ENCODE measurements at regions of chr1 and their contacts with region 1.

Region 1: DNA sequence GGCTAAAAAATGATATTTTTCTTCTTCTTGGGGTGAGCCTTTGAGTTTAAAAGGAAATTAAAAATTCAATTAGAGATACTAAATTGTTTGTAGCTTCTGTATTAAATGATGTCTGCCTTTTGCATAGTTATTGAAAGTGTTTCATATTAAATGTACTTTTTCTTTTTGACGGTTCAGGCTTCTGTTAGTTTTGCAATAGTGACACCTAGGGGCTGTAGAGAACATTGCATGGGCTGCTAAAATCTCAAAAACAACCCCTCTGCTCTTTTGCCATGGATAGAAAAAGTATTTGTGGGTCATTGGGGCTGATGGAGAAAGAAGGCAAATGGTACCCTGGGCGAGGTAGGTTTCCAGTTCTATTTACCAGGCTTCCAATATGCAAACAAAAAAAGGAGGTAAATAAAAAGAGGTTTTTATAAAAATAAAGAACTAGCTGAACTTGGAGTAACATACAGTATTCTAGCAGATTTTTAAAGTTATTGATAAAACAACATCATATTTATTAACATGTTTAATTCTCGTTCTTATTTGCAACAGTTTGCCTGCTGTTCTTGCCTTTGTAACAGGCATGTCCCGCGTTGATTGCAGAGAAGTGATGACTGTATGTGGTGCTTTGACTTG is 115.4 kb upstream of the HOOK1 start:
- DNase-seq: no peak
- H3K4me3 ChIP-seq: no peak overlapping the region
- H3K27ac ChIP-seq: peak overlapping the region in 3 of 4 donors; percentile 24 to 56 (median 51)
- H3K4me1 ChIP-seq: peaks cover 0 to 64% (median 44%) of the 10 kb centered on the region in 4 donors
- H3K27me3 ChIP-seq: no peaks in the 10 kb centered on the region
- CTCF ChIP-seq: peak; percentile 84 to 96 (median 96)
- EP300 ChIP-seq: no peak
- POLR2A ChIP-seq: no peak

Region 2: DNA sequence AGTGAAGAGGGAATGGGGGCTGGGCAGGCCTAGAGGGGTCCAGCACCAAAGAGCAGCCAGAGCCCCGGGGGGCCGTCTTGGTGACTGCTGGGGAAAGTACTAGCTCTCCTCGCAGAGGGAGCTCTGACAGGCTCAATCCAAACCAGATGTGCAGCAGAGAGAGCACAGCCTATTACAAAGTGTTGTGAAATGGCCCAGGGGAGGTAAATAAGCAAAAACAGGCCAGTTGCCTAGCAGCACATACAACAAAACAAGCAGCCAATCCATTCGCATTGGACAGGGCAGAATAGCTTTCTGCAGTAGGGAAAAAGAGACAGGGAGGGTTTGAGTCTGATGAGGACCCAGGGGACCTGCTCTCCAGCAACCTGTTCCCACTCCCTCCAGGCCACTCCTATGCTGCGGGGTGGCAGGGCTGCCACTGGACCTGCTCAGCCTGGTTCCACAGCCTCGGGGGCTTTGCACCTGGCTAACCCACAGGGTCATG is 642.1 kb before region 1 on chr1:
- intact Hi-C with region 1: loop called (anchors 5 kb)
- DNase-seq: peak; percentile 92
- H3K4me3 ChIP-seq: no peak overlapping the region
- H3K27ac ChIP-seq: peak overlapping the region; percentile 43 to 68 (median 58)
- H3K4me1 ChIP-seq: peaks cover 0 to 51% (median 29%) of the 10 kb centered on the region in 4 donors
- H3K27me3 ChIP-seq: no peaks in the 10 kb centered on the region
- CTCF ChIP-seq: no peak
- EP300 ChIP-seq: peak in 3 of 4 donors; percentile 36 to 89 (median 61)
- POLR2A ChIP-seq: no peak

Region 3: DNA sequence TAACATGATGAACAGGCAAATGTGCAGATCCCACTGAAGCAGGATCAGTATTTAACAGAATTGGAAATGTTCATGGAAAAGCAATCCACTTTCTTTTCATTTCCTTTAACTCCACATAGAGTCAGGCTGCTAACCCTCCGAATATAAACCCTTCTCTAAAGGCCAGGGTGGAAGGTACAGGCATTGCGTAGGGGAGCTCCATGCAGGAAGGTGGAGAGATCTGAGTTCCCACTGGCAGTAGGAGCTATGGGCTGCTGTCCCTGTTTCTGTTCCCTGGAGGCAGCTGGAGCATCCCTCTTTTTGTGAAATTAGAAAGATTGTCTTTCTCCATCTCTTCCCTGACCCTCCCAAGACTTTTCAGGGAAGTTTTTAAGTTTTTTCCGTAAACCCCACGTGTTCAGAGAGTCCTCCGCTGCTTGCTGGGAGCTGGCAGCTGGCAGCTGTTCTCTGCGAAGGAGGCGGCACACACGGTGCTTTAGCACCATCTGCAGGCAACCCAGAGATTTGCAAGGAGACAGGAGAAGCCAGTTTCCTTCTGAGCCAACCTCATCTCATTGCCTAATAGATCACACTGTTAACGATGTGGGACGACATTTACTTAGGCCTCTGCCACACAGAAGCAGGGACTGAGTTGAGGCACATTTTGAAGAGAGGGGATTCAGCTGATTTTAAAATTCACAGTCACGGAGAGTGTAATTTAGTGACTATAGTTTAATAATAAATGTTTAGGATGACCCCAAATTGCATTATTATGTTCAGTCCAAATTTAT is 60.0 kb after region 1 on chr1:
- intact Hi-C with region 1: loop called (anchors 5 kb)
- DNase-seq: peak; percentile 94
- H3K4me3 ChIP-seq: peak overlapping the region in 3 of 4 donors; percentile 23 to 34 (median 29)
- H3K27ac ChIP-seq: peak overlapping the region; percentile 36 to 76 (median 72)
- H3K4me1 ChIP-seq: peaks cover 0 to 33% (median 15%) of the 10 kb centered on the region in 4 donors
- H3K27me3 ChIP-seq: no peaks in the 10 kb centered on the region
- CTCF ChIP-seq: peak; percentile 92 to 98 (median 96)
- EP300 ChIP-seq: no peak
- POLR2A ChIP-seq: no peak

Region 4: GRCh38 chr1:60185684-60186083 is 486.3 kb after region 1 on chr1:
- intact Hi-C with region 1: no loop called
- DNase-seq: no peak
- H3K4me3 ChIP-seq: no peak overlapping the region
- H3K27ac ChIP-seq: no peak overlapping the region
- H3K4me1 ChIP-seq: no peaks in the 10 kb centered on the region
- H3K27me3 ChIP-seq: no peaks in the 10 kb centered on the region
- CTCF ChIP-seq: no peak
- EP300 ChIP-seq: no peak
- POLR2A ChIP-seq: no peak

Measured in sigmoid colon (tissue), 7 donors.